B cell (primary cell): ENCODE measurements at regions of chr2 and their contacts with region 1.

Region 1: GRCh38 chr2:12120281-12121150 is 374.1 kb downstream of the LPIN1 start:
- DNase-seq: no peak
- ATAC-seq: peak; percentile 35
- H3K4me3 ChIP-seq: no peak overlapping the region
- H3K4me3 Mint-ChIP-seq: no peak overlapping the region
- H3K27ac ChIP-seq: no peak overlapping the region
- H3K27ac Mint-ChIP-seq: no peak overlapping the region
- H3K4me1 ChIP-seq: peaks cover 26 to 38% of the 10 kb centered on the region in 2 donors
- H3K4me1 Mint-ChIP-seq: peaks cover 34% of the 10 kb centered on the region
- H3K27me3 ChIP-seq: no peaks in the 10 kb centered on the region
- H3K27me3 Mint-ChIP-seq: no peaks in the 10 kb centered on the region
- CTCF ChIP-seq: no peak

Region 2: GRCh38 chr2:11930211-11930761 is 190.2 kb before region 1 on chr2:
- CTCF ChIA-PET with region 1: no interaction called
- POLR2A ChIA-PET with region 1: no interaction called
- intact Hi-C with region 1: no loop called
- DNase-seq: no peak
- ATAC-seq: no peak
- H3K4me3 ChIP-seq: no peak overlapping the region
- H3K4me3 Mint-ChIP-seq: no peak overlapping the region
- H3K27ac ChIP-seq: no peak overlapping the region
- H3K27ac Mint-ChIP-seq: no peak overlapping the region
- H3K4me1 ChIP-seq: peaks cover 12 to 28% of the 10 kb centered on the region in 2 donors
- H3K4me1 Mint-ChIP-seq: peaks cover 22% of the 10 kb centered on the region
- H3K27me3 ChIP-seq: no peaks in the 10 kb centered on the region
- H3K27me3 Mint-ChIP-seq: no peaks in the 10 kb centered on the region
- CTCF ChIP-seq: no peak

Region 3: DNA sequence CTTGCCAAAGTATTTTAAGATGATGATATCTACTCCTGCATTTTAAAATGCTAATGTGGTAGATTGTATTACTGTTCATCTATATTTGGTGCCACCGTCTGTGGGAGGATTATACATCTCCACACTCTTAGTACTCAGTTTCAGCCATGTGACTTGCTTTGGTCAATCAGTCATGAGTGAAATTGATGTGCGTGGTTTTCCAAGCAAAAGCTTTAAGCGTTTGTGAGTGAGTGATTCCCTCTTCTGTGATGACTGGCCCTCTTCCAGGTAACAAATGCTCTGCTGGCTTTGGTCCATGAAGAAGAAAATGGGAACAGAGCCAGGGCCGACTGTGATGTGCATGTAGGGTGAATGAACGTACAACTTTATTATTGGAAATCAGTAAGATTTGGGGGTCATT is 43.7 kb before region 1 on chr2:
- CTCF ChIA-PET with region 1: no interaction called
- POLR2A ChIA-PET with region 1: no interaction called
- intact Hi-C with region 1: loop called (anchors 10 kb)
- DNase-seq: no peak
- ATAC-seq: no peak
- H3K4me3 ChIP-seq: no peak overlapping the region
- H3K4me3 Mint-ChIP-seq: no peak overlapping the region
- H3K27ac ChIP-seq: no peak overlapping the region
- H3K27ac Mint-ChIP-seq: no peak overlapping the region
- H3K4me1 ChIP-seq: peaks cover 25 to 29% of the 10 kb centered on the region in 2 donors
- H3K4me1 Mint-ChIP-seq: peaks cover 30% of the 10 kb centered on the region
- H3K27me3 ChIP-seq: no peaks in the 10 kb centered on the region
- H3K27me3 Mint-ChIP-seq: no peaks in the 10 kb centered on the region
- CTCF ChIP-seq: no peak

Region 4: DNA sequence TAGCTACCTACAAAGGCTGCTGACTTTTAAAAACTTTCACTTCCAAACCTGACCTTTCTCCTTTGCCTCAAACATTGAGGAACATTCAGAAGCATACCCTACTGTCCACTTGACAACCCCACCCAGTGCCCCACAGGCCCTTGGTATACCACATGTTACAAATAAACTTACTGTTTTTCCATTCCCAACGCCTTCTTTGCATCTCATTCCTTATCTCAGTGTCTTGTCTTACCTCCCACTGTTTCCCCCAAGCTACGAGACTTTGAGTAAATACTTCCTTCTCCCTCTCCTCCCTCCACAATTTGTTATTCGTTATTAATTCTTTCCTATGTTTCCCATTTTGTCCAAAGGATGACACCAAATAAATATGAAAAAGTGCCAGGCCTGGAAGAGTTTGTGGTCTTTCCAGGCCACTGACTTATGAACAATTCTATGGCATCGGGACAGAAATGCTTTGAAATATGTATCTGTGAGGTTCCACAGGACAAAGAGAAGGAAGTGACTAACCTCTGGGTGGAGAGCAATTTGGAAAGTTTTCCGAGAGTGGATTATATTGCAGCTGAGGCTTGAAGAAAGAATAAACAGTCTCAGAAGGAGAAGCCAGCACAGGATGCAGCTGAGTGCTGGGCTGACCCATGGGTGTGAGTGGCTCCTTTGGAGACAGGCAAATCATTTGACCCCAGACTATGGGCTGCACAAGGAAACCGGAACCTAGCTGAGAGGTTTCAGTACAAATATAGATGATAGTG is 35.0 kb after region 1 on chr2:
- CTCF ChIA-PET with region 1: no interaction called
- POLR2A ChIA-PET with region 1: no interaction called
- intact Hi-C with region 1: no loop called
- DNase-seq: no peak
- ATAC-seq: no peak
- H3K4me3 ChIP-seq: no peak overlapping the region
- H3K4me3 Mint-ChIP-seq: no peak overlapping the region
- H3K27ac ChIP-seq: no peak overlapping the region
- H3K27ac Mint-ChIP-seq: no peak overlapping the region
- H3K4me1 ChIP-seq: peaks cover 6 to 7% of the 10 kb centered on the region in 2 donors
- H3K4me1 Mint-ChIP-seq: peaks cover 21% of the 10 kb centered on the region
- H3K27me3 ChIP-seq: no peaks in the 10 kb centered on the region
- H3K27me3 Mint-ChIP-seq: no peaks in the 10 kb centered on the region
- CTCF ChIP-seq: no peak